A673 (cell line): ENCODE measurements at regions of chr3 and their contacts with region 1.

Region 1: DNA sequence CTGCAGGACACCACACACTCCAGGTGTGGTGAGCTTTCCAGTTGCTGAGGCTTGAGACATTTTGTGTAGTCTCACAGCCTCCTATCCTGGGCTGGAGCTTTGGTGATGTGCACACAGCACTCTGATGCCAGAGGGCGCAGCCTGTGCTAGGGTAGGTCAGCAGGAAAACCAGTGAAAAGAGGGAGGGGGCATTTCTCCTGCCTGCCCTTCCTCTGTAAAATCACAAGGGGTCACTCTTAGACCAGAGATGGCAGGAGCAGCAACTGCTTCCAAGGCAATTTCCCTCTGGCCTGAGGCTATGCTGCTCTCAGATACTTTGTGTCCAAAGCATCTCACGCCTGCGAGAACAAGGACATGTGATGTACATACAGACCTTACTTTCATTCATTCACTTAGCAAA is 16.5 kb upstream of the MUSTN1 start:
- DNase-seq: peak; percentile 4
- H3K4me3 ChIP-seq: no peak overlapping the region
- H3K27ac ChIP-seq: no peak overlapping the region
- H3K4me1 ChIP-seq: no peaks in the 10 kb centered on the region
- H3K27me3 ChIP-seq: no peaks in the 10 kb centered on the region
- CTCF ChIP-seq: peak; percentile 24; the same call in 1 of the 2 replicates

Region 2: GRCh38 chr3:52339612-52340011 is 511.7 kb before region 1 on chr3:
- CTCF ChIA-PET with region 1: no interaction called
- POLR2A ChIA-PET with region 1: no interaction called
- intact Hi-C with region 1: no loop called
- DNase-seq: peak; percentile 71
- H3K4me3 ChIP-seq: no peak overlapping the region
- H3K27ac ChIP-seq: no peak overlapping the region
- H3K4me1 ChIP-seq: no peaks in the 10 kb centered on the region
- H3K27me3 ChIP-seq: no peaks in the 10 kb centered on the region
- CTCF ChIP-seq: peak; percentile 60

Region 3: GRCh38 chr3:53072653-53073552 is 221.6 kb after region 1 on chr3:
- CTCF ChIA-PET with region 1: no interaction called
- POLR2A ChIA-PET with region 1: no interaction called
- intact Hi-C with region 1: loop called (anchors 5 kb)
- DNase-seq: peak; percentile 71
- H3K4me3 ChIP-seq: no peak overlapping the region
- H3K27ac ChIP-seq: no peak overlapping the region
- H3K4me1 ChIP-seq: peaks cover 4% of the 10 kb centered on the region
- H3K27me3 ChIP-seq: no peaks in the 10 kb centered on the region
- CTCF ChIP-seq: peak; percentile 81